Right lobe of liver (tissue), 6 donors: ENCODE measurements at regions of chr3 and their contacts with region 1.

Region 1: DNA sequence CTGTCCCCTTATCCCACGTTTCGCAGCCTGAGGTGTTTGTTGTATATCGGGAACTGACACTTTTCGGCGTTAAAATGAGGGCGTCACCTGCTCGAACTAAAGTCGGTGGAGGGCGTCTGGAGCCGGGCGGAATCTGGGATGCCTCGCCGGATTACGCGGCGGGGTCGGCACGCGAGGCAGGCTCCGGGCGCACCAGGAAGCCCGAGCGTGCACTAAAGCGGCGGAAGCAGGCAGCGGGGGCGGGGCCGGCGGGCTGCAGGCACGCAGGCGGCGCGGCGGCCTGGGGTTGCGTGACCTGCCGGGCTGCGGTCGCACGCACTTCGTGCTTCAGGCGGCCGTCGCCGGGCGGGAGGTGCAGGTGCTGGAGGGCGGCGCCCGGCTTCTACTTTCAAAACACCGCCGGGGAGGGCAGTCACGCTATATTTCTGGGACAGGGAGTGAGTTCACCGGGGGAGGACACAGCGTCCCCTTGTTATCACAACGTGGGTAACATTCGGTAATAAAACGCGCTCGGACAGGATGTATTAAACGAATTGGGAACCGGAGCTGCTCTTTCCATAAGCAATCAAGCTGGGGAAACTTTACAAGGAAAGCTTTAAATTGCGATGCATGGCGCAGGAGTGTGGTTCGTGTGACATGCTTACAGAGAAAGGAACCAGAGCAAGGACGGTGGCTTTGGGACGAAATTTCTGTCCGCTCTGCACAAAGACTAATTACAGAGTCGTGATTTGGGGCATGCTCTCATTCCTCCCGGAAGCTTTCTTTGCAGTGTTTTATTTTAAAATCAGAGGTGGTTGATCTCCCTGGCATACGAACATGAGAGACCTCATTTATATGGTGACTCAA is 9.1 kb upstream of the LEKR1 start:
- DNase-seq: peak; percentile 91 to 94 (median 94)
- ATAC-seq: peak; percentile 67 to 88 (median 86)
- H3K4me3 ChIP-seq: peak overlapping the region; percentile 50 to 69 (median 59)
- H3K27ac ChIP-seq: peak overlapping the region; percentile 95 to 98 (median 97)
- H3K4me1 ChIP-seq: peaks cover 0 to 40% (median 11%) of the 10 kb centered on the region in 4 donors
- H3K27me3 ChIP-seq: no peaks in the 10 kb centered on the region
- CTCF ChIP-seq: peak in 1 of 4 donors; percentile 15
- POLR2A ChIP-seq: peak; percentile 91

Region 2: GRCh38 chr3:156892701-156893100 is 75.7 kb after region 1 on chr3:
- intact Hi-C with region 1: no loop called
- DNase-seq: no peak
- ATAC-seq: no peak
- H3K4me3 ChIP-seq: no peak overlapping the region
- H3K27ac ChIP-seq: no peak overlapping the region
- H3K4me1 ChIP-seq: no peaks in the 10 kb centered on the region
- H3K27me3 ChIP-seq: no peaks in the 10 kb centered on the region
- CTCF ChIP-seq: no peak
- POLR2A ChIP-seq: no peak

Region 3: GRCh38 chr3:157081681-157082210 is 264.7 kb after region 1 on chr3:
- intact Hi-C with region 1: loop called in 1 of 2 experiments (anchors 10 kb)
- DNase-seq: peak; percentile 87 to 91 (median 89)
- ATAC-seq: peak; percentile 95 to 98 (median 96)
- H3K4me3 ChIP-seq: no peak overlapping the region
- H3K27ac ChIP-seq: peak overlapping the region; percentile 15 to 72 (median 71)
- H3K4me1 ChIP-seq: peaks cover 0 to 16% (median 6%) of the 10 kb centered on the region in 4 donors
- H3K27me3 ChIP-seq: no peaks in the 10 kb centered on the region
- CTCF ChIP-seq: peak; percentile 93 to 99 (median 96)
- POLR2A ChIP-seq: no peak